B cell (primary cell): ENCODE measurements at regions of chr1 and their contacts with region 1.

Region 1: GRCh38 chr1:39538588-39539465 is 37.8 kb downstream of the PABPC4 start:
- DNase-seq: peak; percentile 72
- ATAC-seq: peak; percentile 78
- H3K4me3 ChIP-seq: no peak overlapping the region
- H3K4me3 Mint-ChIP-seq: no peak overlapping the region
- H3K27ac ChIP-seq: no peak overlapping the region
- H3K27ac Mint-ChIP-seq: no peak overlapping the region
- H3K4me1 ChIP-seq: peaks cover 20 to 27% of the 10 kb centered on the region in 2 donors
- H3K4me1 Mint-ChIP-seq: peaks cover 20% of the 10 kb centered on the region
- H3K27me3 ChIP-seq: no peaks in the 10 kb centered on the region
- H3K27me3 Mint-ChIP-seq: no peaks in the 10 kb centered on the region
- CTCF ChIP-seq: peak; percentile 91

Region 2: DNA sequence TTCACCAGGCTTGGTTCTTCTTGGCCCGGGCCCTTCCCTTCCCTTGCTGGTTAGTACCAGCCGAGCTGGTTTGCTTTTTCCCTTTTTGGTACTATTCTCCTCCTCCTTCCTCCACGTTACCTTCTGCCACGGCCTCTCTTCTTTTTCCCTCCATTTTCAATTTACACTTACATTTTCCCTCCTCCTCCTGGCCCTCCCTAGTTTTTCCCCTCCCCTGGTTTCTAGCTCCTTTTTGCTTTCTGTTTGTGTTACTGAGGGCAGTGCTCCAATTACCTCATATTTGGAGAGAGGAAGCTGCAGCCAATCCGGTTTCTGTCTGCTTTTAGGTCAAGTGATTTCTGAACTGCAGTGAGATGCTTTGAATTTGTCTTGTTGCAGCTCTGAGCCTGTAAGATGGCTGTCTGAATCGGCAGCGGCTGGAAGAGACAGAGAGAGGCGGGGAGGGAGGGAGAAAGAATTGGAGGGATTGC is 270.7 kb before region 1 on chr1:
- CTCF ChIA-PET with region 1: interaction called, 9 read pairs
- POLR2A ChIA-PET with region 1: no interaction called
- intact Hi-C with region 1: loop called (anchors 10 kb)
- DNase-seq: peak; percentile 49
- ATAC-seq: no peak
- H3K4me3 ChIP-seq: peak overlapping the region in 3 of 5 experiments; percentile 12 to 47 (median 15)
- H3K4me3 Mint-ChIP-seq: peak overlapping the region; percentile 85
- H3K27ac ChIP-seq: peak overlapping the region; percentile 73 to 74
- H3K27ac Mint-ChIP-seq: peak overlapping the region; percentile 89
- H3K4me1 ChIP-seq: peaks cover 66 to 67% of the 10 kb centered on the region in 2 donors
- H3K4me1 Mint-ChIP-seq: peaks cover 65% of the 10 kb centered on the region
- H3K27me3 ChIP-seq: no peaks in the 10 kb centered on the region
- H3K27me3 Mint-ChIP-seq: no peaks in the 10 kb centered on the region
- CTCF ChIP-seq: no peak

Region 3: GRCh38 chr1:39466413-39467107 is 72.3 kb before region 1 on chr1:
- CTCF ChIA-PET with region 1: interaction called, 14 read pairs
- POLR2A ChIA-PET with region 1: no interaction called
- intact Hi-C with region 1: loop called (anchors 10 kb)
- DNase-seq: no peak
- ATAC-seq: no peak
- H3K4me3 ChIP-seq: no peak overlapping the region
- H3K4me3 Mint-ChIP-seq: no peak overlapping the region
- H3K27ac ChIP-seq: no peak overlapping the region
- H3K27ac Mint-ChIP-seq: no peak overlapping the region
- H3K4me1 ChIP-seq: no peaks in the 10 kb centered on the region
- H3K4me1 Mint-ChIP-seq: no peaks in the 10 kb centered on the region
- H3K27me3 ChIP-seq: no peaks in the 10 kb centered on the region
- H3K27me3 Mint-ChIP-seq: no peaks in the 10 kb centered on the region
- CTCF ChIP-seq: no peak

Region 4: GRCh38 chr1:39478126-39478915 is 60.5 kb before region 1 on chr1:
- CTCF ChIA-PET with region 1: interaction called, 5 read pairs
- POLR2A ChIA-PET with region 1: no interaction called
- intact Hi-C with region 1: loop called (anchors 10 kb)
- DNase-seq: no peak
- ATAC-seq: no peak
- H3K4me3 ChIP-seq: no peak overlapping the region
- H3K4me3 Mint-ChIP-seq: no peak overlapping the region
- H3K27ac ChIP-seq: no peak overlapping the region
- H3K27ac Mint-ChIP-seq: no peak overlapping the region
- H3K4me1 ChIP-seq: no peaks in the 10 kb centered on the region
- H3K4me1 Mint-ChIP-seq: no peaks in the 10 kb centered on the region
- H3K27me3 ChIP-seq: no peaks in the 10 kb centered on the region
- H3K27me3 Mint-ChIP-seq: no peaks in the 10 kb centered on the region
- CTCF ChIP-seq: no peak

Region 5: DNA sequence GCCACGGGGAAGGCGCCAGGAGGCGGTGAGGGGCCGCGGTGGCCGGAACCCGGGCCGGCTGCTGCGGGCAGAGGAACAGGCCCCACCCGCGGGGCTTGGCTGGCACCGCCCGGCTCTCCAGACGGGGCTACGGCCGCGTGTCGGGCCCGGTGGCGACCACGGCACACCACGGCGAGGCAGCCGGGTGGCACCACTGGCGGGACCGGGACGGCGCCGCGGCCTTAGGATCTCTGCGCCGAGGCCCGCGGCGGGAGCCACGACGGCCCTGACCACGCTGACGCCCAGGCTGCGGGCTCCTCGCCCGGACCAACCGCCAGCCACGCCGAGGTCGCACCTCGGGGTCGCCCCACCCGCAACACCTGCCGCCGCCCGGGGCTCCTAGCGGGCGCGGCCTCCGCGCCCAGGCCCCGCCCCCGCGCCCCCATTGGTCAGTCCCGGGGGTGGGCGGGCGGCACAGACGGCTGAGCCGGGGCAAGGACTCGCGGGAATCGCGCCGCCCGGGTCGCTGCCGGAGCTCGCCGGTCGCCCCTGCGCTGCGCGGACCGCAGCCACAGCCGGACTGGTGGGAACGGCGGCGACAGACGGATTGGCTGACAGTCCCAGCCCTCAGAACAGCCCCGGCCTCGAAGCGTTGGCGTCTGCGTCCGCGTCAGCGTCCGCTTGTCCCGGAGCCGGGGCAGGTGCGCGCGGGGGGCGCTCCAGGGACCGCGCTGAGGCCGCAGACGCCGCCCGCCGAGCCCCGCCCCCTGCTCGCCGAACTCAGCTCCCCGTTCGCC is 47.5 kb before region 1 on chr1 and contains the start of gene BMP8A:
- CTCF ChIA-PET with region 1: interaction called, 12 read pairs
- POLR2A ChIA-PET with region 1: no interaction called
- intact Hi-C with region 1: loop called (anchors 1 kb)
- DNase-seq: peak; percentile 90
- ATAC-seq: peak; percentile 94
- H3K4me3 ChIP-seq: peak within 1 kb of the TSS in 4 of 5 experiments; percentile 31 to 60 (median 56)
- H3K4me3 Mint-ChIP-seq: peak within 1 kb of the TSS; percentile 81
- H3K27ac ChIP-seq: no peak within 1 kb of the TSS
- H3K27ac Mint-ChIP-seq: peak within 1 kb of the TSS; percentile 20
- H3K4me1 ChIP-seq: peaks cover 3 to 8% of the 10 kb centered on the region in 2 donors
- H3K4me1 Mint-ChIP-seq: peaks cover 9% of the 10 kb centered on the region
- H3K27me3 ChIP-seq: peaks cover 0 to 19% (median 9%) of the 10 kb centered on the region in 4 experiments
- H3K27me3 Mint-ChIP-seq: peaks cover 13% of the 10 kb centered on the region
- CTCF ChIP-seq: no peak
- total RNA-seq, gene BMP8A: 0.25 and 0.85 TPM in 2 replicates